IMR-90 (cell line): ENCODE measurements at regions of chr3 and their contacts with region 1.

Region 1: DNA sequence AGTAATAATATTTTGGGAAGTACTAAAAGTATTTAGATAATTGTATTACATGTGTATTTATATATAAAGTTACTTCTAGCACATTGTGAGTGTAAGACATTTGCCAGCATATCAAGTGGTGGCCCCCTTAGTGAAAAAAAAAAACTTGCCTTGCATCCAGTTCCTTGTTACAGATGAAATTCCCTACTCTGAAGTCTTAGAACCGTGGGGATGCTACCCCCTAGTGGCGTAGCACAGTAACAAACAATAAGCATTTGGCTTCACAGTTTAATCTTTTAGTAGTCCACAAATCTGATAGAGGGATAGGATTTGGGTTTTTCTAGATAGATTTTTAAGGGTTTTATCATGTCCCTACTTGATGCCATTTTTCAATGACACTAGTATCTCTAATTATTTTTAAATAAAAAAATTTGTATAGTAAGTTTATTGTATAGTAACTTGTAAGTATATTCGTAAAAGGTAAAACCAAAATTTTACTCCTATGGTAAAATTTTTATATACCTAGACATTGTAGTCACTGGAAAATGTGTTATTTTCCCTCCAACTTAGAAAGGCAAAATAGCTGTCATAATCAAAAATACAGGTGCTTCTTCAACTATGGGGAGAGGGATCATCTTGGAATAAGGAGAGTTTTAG is 14.3 kb downstream of the SMC4 start:
- DNase-seq: peak; percentile 84
- ATAC-seq: peak; percentile 91
- H3K4me3 ChIP-seq: no peak overlapping the region
- H3K27ac ChIP-seq: no peak overlapping the region
- H3K4me1 ChIP-seq: peaks cover 3% of the 10 kb centered on the region
- H3K27me3 ChIP-seq: no peaks in the 10 kb centered on the region
- CTCF ChIP-seq: peak; percentile 89
- POLR2A ChIP-seq: no peak
- RAD21 ChIP-seq: peak; percentile 84

Region 2: GRCh38 chr3:159828542-159828943 is 585.2 kb before region 1 on chr3:
- CTCF ChIA-PET with region 1: no interaction called
- POLR2A ChIA-PET with region 1: no interaction called
- dilution Hi-C with region 1: no loop called
- in situ Hi-C with region 1: no loop called
- intact Hi-C with region 1: loop called (anchors 5 kb)
- DNase-seq: peak; percentile 68
- ATAC-seq: peak; percentile 70
- H3K4me3 ChIP-seq: no peak overlapping the region
- H3K27ac ChIP-seq: 0 out of 2 replicates have a peak overlapping the region, but pooled peaks have one; percentile 65
- H3K4me1 ChIP-seq: peaks cover 15% of the 10 kb centered on the region
- H3K27me3 ChIP-seq: no peaks in the 10 kb centered on the region
- CTCF ChIP-seq: peak; percentile 60
- POLR2A ChIP-seq: no peak
- RAD21 ChIP-seq: peak; percentile 69

Region 3: DNA sequence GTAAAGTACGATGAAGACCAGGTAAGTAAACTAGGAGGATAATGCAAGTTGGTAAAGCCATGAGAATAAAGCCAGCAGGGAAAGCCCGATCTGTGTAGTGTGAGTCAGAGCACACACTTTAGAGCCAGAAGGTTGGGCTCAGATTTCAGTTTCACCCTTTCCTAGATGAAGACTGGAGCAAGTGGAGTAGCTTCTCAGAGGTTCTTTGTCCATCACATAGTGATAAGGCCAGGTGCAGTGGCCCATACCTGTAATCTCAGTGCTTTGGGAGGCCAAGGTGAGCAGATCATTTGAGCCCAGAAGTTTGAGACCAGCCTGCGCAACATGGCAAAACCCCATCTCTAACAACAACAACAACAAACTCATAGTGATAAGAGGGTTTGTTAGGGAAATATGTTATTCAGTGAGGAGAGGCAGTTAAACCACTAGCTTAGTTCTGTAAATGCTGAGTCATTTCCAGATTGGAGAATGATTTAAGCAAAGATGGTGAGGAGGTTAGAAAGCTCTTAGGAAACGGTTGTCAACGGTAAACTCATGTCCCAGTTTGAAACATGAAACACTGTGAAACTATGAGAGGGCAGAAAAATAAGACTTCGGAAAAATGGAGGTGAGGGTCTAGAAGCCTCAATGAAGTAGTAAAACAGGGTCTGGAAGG is 386.1 kb before region 1 on chr3:
- CTCF ChIA-PET with region 1: interaction called, 4 read pairs
- POLR2A ChIA-PET with region 1: no interaction called
- dilution Hi-C with region 1: no loop called
- in situ Hi-C with region 1: loop called (anchors 10 kb)
- intact Hi-C with region 1: loop called (anchors 1 kb)
- DNase-seq: peak; percentile 88
- ATAC-seq: peak; percentile 79
- H3K4me3 ChIP-seq: no peak overlapping the region
- H3K27ac ChIP-seq: peak overlapping the region; percentile 93
- H3K4me1 ChIP-seq: peaks cover 14% of the 10 kb centered on the region
- H3K27me3 ChIP-seq: no peaks in the 10 kb centered on the region
- CTCF ChIP-seq: no peak
- POLR2A ChIP-seq: peak; percentile 53; the same call in 1 of the 2 replicates
- RAD21 ChIP-seq: no peak

Region 4: GRCh38 chr3:160163229-160163878 is 250.4 kb before region 1 on chr3:
- CTCF ChIA-PET with region 1: interaction called, 4 read pairs
- POLR2A ChIA-PET with region 1: no interaction called
- dilution Hi-C with region 1: no loop called
- in situ Hi-C with region 1: loop called (anchors 10 kb)
- intact Hi-C with region 1: loop called (anchors 1 kb)
- DNase-seq: peak; percentile 47
- ATAC-seq: peak; percentile 72
- H3K4me3 ChIP-seq: no peak overlapping the region
- H3K27ac ChIP-seq: no peak overlapping the region
- H3K4me1 ChIP-seq: no peaks in the 10 kb centered on the region
- H3K27me3 ChIP-seq: no peaks in the 10 kb centered on the region
- CTCF ChIP-seq: peak; percentile 74
- POLR2A ChIP-seq: no peak
- RAD21 ChIP-seq: peak; percentile 69

Region 5: DNA sequence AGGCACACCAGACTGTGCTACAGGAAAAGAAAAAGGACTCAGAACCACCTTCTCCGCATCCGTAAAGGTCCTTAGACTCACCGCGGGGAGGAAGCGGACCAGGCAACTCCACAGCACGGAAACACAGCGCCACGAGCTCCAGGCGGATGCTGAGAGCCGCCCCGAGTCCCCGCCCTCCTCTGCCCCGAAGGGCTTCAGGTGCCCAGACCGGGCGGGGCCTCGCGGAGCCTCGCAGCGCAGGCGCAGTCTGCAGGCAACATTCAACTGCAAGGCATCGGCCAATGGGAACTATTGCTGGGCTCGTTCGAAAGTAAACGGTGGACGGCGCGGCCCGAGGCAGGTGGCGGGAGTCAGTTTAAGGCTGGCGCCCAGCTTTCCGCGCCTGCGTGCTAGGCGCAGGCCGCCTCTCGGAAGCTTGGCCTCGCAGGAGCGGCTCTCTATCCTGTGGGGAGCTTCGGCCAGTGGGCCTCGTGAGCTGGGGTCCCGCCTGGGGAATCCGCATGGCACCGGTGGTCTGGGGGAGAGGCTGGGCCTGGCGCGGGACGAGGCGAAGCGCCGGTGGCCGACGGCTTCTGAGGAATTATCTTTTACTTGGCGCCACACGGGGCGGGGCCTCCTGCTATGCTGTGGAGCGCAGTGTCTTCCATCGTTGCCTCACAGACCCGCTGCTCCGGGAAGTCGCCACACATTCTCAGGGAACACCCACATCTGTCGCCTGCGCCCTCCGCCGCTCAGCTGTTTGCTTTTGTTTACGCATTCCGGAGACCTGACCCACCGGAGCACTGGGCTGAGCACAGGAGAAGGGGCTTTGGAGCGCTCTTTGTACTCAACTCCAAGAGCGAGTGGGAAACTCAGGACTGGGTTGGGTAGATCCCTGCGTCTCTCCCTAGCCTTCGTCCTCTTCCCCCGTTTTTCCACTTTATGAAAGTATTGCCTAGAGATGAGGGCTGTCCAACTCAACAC is 36.2 kb after region 1 on chr3 and contains the start of gene TRIM59:
- CTCF ChIA-PET with region 1: interaction called, 4 read pairs
- POLR2A ChIA-PET with region 1: interaction called, 3 read pairs
- dilution Hi-C with region 1: no loop called
- in situ Hi-C with region 1: no loop called
- intact Hi-C with region 1: loop called (anchors 2 kb)
- DNase-seq: peak; percentile 97
- ATAC-seq: peak; percentile 88
- H3K4me3 ChIP-seq: peak within 1 kb of the TSS; percentile 68
- H3K27ac ChIP-seq: peak within 1 kb of the TSS; percentile 87
- H3K4me1 ChIP-seq: peaks cover 10% of the 10 kb centered on the region
- H3K27me3 ChIP-seq: no peaks in the 10 kb centered on the region
- CTCF ChIP-seq: no peak
- POLR2A ChIP-seq: peak; percentile 49; the same call in 1 of the 2 replicates
- RAD21 ChIP-seq: no peak
- total RNA-seq, gene TRIM59: 65.4 and 68.3 TPM in 2 replicates